ENCODE measurements at regions of chr12 and their contacts with region 1.

Region 1: GRCh38 chr12:104132351-104132956 is 5.6 kb downstream of the NFYB start:
- DNase-seq: peak; percentile 38
- H3K4me3 Mint-ChIP-seq: no peak overlapping the region
- H3K27ac Mint-ChIP-seq: no peak overlapping the region
- H3K4me1 Mint-ChIP-seq: peaks cover 17% of the 10 kb centered on the region
- H3K27me3 Mint-ChIP-seq: no peaks in the 10 kb centered on the region

Region 2: GRCh38 chr12:104064031-104064822 is 68.2 kb before region 1 on chr12 and contains the start of gene HCFC2:
- intact Hi-C with region 1: no loop called
- DNase-seq: peak; percentile 97
- H3K4me3 Mint-ChIP-seq: peak within 1 kb of the TSS; percentile 98
- H3K27ac Mint-ChIP-seq: peak within 1 kb of the TSS; percentile 91
- H3K4me1 Mint-ChIP-seq: peaks cover 20% of the 10 kb centered on the region
- H3K27me3 Mint-ChIP-seq: peaks cover 30% of the 10 kb centered on the region
- total RNA-seq, gene HCFC2: 8.2 and 8.6 TPM in 2 replicates

Region 3: GRCh38 chr12:104121001-104121400 is 11.5 kb before region 1 on chr12:
- intact Hi-C with region 1: loop called (anchors 2 kb)
- DNase-seq: no peak
- H3K4me3 Mint-ChIP-seq: no peak overlapping the region
- H3K27ac Mint-ChIP-seq: no peak overlapping the region
- H3K4me1 Mint-ChIP-seq: no peaks in the 10 kb centered on the region
- H3K27me3 Mint-ChIP-seq: no peaks in the 10 kb centered on the region